ENCODE measurements at regions of chr3 and their contacts with region 1.

Region 1: GRCh38 chr3:15948388-15948787 is 150.6 kb upstream of the ANKRD28 start:
- DNase-seq: no peak
- H3K4me3 ChIP-seq: no peak overlapping the region
- H3K27ac ChIP-seq: no peak overlapping the region
- H3K4me1 ChIP-seq: no peaks in the 10 kb centered on the region
- H3K27me3 ChIP-seq: no peaks in the 10 kb centered on the region
- CTCF ChIP-seq: no peak

Region 2: DNA sequence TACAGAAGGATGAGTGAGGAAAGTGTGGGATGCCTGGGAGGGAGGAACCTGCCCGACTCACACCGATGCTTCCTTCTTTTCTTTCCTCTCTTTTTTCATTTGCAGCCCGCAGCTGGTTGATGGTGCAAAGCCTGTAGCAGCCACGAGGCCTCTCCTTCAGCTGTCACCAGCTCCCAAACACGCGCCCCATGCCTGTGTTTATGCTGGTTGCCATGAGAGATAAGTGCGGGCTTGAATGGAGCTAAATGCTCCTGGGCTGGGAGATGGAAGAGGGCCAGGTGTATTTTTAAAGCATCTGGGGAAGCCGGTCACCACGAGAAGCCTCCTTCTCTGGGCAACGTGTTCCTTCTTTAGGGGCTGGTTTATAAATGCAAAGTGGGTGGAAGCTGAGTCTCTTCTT is 436.2 kb before region 1 on chr3:
- CTCF ChIA-PET with region 1: no interaction called
- dilution Hi-C with region 1: no loop called
- in situ Hi-C with region 1: no loop called
- intact Hi-C with region 1: no loop called
- DNase-seq: no peak
- H3K4me3 ChIP-seq: no peak overlapping the region
- H3K27ac ChIP-seq: no peak overlapping the region
- H3K4me1 ChIP-seq: no peaks in the 10 kb centered on the region
- H3K27me3 ChIP-seq: no peaks in the 10 kb centered on the region
- CTCF ChIP-seq: no peak

Region 3: DNA sequence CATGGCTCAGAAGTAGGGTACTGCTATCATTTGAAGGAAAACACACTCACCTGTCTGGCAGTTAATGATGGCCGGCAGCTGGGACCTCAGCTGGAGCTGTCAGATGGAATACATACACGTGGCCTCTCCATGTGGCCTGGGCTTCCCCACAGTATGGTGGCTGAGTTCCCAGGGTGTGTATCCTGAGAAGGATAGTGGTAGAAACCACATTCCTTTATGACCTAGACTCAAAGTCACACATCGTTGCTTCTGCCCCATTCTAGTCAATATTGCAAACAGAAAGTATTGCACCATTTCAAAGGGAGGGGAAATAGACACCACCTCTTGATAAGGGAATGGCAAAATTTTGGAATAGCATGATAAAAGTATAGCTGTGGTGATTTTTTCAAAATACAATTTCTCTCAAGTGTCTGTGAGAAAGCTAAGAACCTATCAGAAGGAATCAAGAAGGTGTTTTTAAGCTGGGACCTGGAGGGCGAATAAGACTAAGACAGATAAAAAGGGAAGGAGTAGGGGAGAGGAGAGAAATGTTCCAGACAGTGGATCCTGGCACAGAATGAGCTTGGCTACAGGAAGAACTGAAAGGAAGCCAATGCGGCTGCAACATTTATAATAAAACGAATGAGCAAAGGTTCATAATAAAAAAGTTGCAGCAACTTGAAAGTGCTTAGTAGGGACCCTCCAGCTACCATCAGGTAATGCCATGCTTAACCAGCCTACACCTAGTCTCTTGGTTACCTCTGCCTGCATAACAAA is 186.0 kb after region 1 on chr3:
- CTCF ChIA-PET with region 1: interaction called, 25 read pairs
- dilution Hi-C with region 1: no loop called
- in situ Hi-C with region 1: no loop called
- intact Hi-C with region 1: no loop called
- DNase-seq: no peak
- H3K4me3 ChIP-seq: no peak overlapping the region
- H3K27ac ChIP-seq: no peak overlapping the region
- H3K4me1 ChIP-seq: no peaks in the 10 kb centered on the region
- H3K27me3 ChIP-seq: no peaks in the 10 kb centered on the region
- CTCF ChIP-seq: no peak